Panc1 (cell line): ENCODE measurements at regions of chr6 and their contacts with region 1.

Region 1: GRCh38 chr6:593139-593906 is 63.6 kb downstream of the HUS1B start:
- DNase-seq: peak; percentile 27
- ATAC-seq: peak; percentile 81; the same call in 1 of the 2 replicates
- H3K4me3 ChIP-seq: no peak overlapping the region
- H3K27ac ChIP-seq: no peak overlapping the region
- H3K4me1 ChIP-seq: no peaks in the 10 kb centered on the region
- H3K27me3 ChIP-seq: no peaks in the 10 kb centered on the region
- CTCF ChIP-seq: peak; percentile 74; the same call in 1 of the 2 replicates

Region 2: DNA sequence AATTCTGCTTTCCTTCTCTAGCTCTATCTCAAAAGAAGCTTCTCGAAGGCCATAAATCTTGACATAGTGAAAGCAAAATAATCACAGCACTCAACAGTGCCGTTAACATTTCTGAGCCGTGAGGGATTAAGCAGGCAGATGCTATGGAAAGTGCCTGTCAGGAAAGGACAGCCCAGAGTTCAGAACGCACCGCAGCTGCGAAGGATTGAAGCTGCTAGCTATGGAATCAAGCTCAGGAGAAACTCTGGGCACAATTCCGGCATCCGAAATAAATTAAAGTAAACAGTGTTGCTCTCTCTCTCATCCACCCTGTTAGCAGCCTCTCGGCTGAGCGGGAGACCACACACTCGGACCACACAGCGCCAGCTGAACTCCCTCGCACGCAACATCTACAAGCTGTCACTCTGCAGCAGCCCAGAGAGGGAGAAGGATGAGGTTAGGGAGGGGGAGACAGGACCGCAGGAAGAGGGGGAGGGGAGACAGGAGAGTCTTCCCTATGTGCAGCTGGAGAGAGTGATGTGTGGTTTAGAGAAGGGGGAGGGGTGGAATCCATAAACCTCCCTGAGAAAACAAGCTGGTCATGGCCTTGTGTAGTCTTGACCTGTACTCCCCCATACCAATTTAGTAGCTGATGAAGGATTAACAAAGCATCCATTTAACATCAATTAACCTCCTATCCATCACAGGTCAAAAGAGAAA is 90.6 kb after region 1 on chr6:
- CTCF ChIA-PET with region 1: interaction called, 5 read pairs
- POLR2A ChIA-PET with region 1: no interaction called
- in situ Hi-C with region 1: no loop called
- intact Hi-C with region 1: loop called (anchors 2 kb)
- DNase-seq: no peak
- ATAC-seq: peak; percentile 85
- H3K4me3 ChIP-seq: peak overlapping the region; percentile 26 to 46; a peak in 3 of 4 replicates
- H3K27ac ChIP-seq: peak overlapping the region; percentile 74
- H3K4me1 ChIP-seq: peaks cover 42% of the 10 kb centered on the region
- H3K27me3 ChIP-seq: no peaks in the 10 kb centered on the region
- CTCF ChIP-seq: no peak

Region 3: GRCh38 chr6:786946-787763 is 193.8 kb after region 1 on chr6:
- CTCF ChIA-PET with region 1: interaction called, 3 read pairs
- POLR2A ChIA-PET with region 1: no interaction called
- in situ Hi-C with region 1: no loop called
- intact Hi-C with region 1: loop called (anchors 5 kb)
- DNase-seq: peak; percentile 15
- ATAC-seq: no peak
- H3K4me3 ChIP-seq: no peak overlapping the region
- H3K27ac ChIP-seq: no peak overlapping the region
- H3K4me1 ChIP-seq: no peaks in the 10 kb centered on the region
- H3K27me3 ChIP-seq: no peaks in the 10 kb centered on the region
- CTCF ChIP-seq: peak; percentile 91

Region 4: DNA sequence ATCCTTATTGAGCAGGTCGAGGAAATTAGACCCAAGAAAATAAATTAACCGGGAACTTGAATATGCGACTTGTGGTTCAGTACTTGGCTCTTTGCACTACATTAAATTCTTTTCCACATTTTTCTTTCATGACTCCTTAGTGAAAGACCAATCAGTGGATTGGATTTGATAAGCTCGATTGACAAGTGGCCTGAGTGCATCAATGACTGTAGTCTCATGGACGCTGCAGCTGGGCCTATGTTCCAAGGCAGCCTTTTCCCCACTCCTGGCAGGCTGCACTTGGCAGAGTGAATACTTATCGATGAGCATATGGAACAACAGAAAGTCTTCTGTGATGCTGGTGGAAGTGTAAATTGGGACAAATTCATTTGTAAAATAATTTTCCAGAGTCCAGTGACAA is 310.4 kb after region 1 on chr6:
- CTCF ChIA-PET with region 1: no interaction called
- POLR2A ChIA-PET with region 1: no interaction called
- in situ Hi-C with region 1: no loop called
- intact Hi-C with region 1: loop called (anchors 10 kb)
- DNase-seq: no peak
- ATAC-seq: no peak
- H3K4me3 ChIP-seq: no peak overlapping the region
- H3K27ac ChIP-seq: no peak overlapping the region
- H3K4me1 ChIP-seq: no peaks in the 10 kb centered on the region
- H3K27me3 ChIP-seq: 0 out of 2 replicates have a peak, but pooled peaks cover 3% of the 10 kb centered on the region
- CTCF ChIP-seq: no peak